Heart right ventricle (tissue), 16 donors: ENCODE measurements at regions of chr5 and their contacts with region 1.

Region 1: DNA sequence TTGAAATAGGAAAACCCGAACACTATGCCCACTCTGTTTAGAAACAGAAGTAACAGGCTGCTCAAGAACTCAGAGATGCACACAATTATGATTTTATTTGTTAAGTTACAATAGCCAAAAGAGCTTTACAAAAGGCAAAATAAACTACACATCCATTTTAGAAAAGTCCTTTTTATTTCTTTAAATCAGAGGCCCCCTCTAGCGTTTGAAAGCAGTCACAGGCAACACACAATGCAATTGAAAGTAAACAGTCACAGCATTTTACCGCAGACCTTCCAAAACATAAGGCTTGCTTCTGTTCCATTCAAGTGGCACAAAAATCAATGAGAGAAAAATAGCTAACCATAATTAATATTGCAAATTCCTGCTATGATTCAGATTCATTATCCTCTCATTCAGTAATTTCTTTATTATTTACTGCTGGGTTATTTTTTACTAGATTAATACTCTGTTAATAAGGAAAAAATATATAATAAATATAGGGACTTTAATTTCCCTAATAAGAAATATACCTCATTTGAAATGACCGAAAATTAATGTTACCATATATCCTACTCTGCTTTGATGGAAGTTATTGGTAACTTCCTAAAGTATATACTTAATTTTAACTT is 78.3 kb downstream of the CEP120 start:
- DNase-seq: peak in 1 of 2 donors; percentile 14
- ATAC-seq: no peak
- H3K4me3 ChIP-seq: no peak overlapping the region
- H3K27ac ChIP-seq: no peak overlapping the region
- H3K4me1 ChIP-seq: no peaks in the 10 kb centered on the region
- H3K27me3 ChIP-seq: no peaks in the 10 kb centered on the region
- CTCF ChIP-seq: peak in 8 of 9 donors; percentile 37 to 78 (median 65)

Region 2: DNA sequence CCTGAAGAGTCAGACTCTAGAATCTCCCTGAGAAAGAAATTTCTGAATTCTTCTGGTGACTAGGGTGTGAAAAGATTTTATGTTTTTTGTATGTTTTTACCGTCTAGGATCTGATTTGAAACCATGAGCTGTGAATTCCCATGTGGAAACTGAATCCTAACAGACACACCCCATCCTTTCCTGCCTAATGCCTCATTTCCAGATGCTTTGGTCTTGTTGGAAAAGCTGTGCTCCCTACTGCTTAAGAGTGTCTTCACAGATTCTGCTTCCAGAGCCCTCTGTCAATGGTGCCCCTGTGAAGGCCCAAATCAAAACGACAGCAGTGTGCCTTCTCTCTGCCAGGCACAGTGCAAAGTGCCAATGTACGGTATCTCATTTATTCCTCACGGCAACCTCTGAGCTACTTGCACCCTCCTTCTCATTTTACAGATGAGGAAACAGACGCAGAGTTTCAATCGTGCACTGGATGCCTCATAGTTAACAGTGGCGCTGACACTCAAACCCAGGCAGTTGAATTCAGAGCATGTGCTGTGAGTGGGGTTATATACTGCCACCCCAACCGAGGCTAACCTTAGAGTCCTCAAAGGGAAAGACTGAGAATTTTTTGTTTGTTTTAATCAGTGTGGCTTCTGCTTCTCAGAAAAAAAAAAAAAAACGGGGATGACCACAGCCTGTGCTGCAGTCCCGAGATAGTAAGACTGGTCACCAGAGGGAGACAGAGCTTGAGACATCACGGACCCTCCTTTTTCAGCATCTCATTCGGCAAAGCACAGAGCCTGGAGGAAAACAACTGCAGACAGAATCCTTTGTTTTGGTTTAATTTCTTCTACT is 844.5 kb before region 1 on chr5:
- intact Hi-C with region 1: loop called in 2 of 10 experiments (anchors 10 kb)
- DNase-seq: peak in 1 of 2 donors; percentile 40
- ATAC-seq: peak; percentile 30 to 86 (median 76)
- H3K4me3 ChIP-seq: peak overlapping the region in 1 of 10 donors; percentile 5
- H3K27ac ChIP-seq: peak overlapping the region in 6 of 10 donors; percentile 4 to 54 (median 34)
- H3K4me1 ChIP-seq: peaks cover 0 to 18% (median 0%) of the 10 kb centered on the region in 9 donors
- H3K27me3 ChIP-seq: no peaks in the 10 kb centered on the region
- CTCF ChIP-seq: peak; percentile 16 to 63 (median 49)

Region 3: DNA sequence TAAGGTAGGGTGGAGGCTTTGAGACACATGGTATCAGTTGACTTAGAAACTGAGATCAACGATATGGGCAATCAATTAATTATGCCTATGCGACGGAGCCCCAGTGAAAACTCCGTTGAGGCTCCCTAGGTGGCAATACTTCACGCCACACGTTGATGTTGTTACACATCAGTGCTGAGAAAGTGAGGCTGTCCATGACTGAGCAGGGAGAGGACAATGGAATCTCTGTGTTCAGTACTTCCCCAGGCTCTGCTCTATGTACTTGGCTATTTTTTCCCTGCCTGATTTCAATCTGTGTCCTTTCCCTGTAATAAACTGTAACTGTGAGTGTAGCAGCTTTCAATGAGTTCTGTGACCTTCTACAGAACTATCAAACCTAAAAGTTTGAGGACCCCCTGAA is 821.1 kb before region 1 on chr5:
- intact Hi-C with region 1: loop called in 1 of 10 experiments (anchors 10 kb)
- DNase-seq: no peak
- ATAC-seq: no peak
- H3K4me3 ChIP-seq: no peak overlapping the region
- H3K27ac ChIP-seq: no peak overlapping the region
- H3K4me1 ChIP-seq: no peaks in the 10 kb centered on the region
- H3K27me3 ChIP-seq: peaks cover 0 to 51% (median 19%) of the 10 kb centered on the region in 7 donors
- CTCF ChIP-seq: no peak

Region 4: GRCh38 chr5:122882837-122883236 is 462.1 kb before region 1 on chr5:
- intact Hi-C with region 1: loop called in 1 of 10 experiments (anchors 10 kb)
- DNase-seq: no peak
- ATAC-seq: no peak
- H3K4me3 ChIP-seq: no peak overlapping the region
- H3K27ac ChIP-seq: no peak overlapping the region
- H3K4me1 ChIP-seq: peaks cover 0 to 11% (median 0%) of the 10 kb centered on the region in 9 donors
- H3K27me3 ChIP-seq: no peaks in the 10 kb centered on the region
- CTCF ChIP-seq: no peak

Region 5: DNA sequence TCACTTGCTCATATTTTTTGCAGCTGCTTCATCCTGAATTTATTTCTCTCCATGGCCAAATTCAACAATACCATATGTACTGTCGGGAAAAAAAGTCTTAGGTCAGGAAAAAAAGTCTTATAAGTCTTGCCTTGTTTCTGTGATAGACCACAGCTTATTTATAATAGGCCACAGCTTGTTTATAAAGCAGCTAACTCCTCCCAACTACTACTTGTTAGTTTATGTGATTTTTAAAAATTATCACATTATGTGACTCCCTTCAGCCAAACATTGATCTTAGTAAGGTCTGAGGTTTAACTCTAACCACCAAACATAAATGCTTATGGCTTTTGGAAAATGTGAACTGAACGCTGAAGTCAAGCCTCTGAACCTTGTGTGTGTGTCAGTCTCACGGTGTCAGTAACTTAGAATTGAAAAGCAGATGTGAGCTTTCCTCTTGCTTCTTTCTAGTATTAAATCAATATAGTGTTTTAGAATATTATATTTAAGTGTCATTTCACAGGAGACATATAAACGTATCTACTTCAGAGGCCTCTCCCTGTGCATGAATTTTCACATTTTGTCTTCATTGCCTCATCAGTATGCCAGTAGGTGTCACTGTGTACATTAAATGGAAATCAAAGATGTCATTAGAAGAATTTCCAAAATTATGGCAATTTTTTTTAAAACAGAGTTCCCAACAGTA is 448.2 kb before region 1 on chr5:
- intact Hi-C with region 1: loop called in 7 of 10 experiments (anchors 5 to 10 kb)
- DNase-seq: no peak
- ATAC-seq: no peak
- H3K4me3 ChIP-seq: no peak overlapping the region
- H3K27ac ChIP-seq: no peak overlapping the region
- H3K4me1 ChIP-seq: peaks cover 0 to under 1% (median 0%) of the 10 kb centered on the region in 9 donors
- H3K27me3 ChIP-seq: no peaks in the 10 kb centered on the region
- CTCF ChIP-seq: peak; percentile 31 to 83 (median 63)

Region 6: DNA sequence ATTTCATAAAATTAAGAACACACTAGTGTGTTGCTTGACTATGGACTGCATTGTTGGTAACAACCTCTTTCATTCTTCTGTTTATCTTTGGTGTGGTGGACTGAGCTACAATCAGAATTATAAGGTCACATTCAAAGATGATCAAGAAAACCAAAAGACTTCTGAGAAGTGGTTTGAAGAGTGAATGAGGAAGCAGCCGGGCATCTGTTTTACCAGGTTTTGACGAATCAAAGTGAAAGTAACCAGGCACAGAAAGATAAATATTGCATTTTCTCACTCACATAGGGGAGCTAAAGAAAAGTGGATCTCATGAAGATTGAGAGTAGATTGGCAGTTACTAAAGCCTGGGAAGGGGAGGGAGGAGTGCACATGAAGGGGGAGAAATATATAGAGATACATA is 812.4 kb after region 1 on chr5:
- intact Hi-C with region 1: no loop called
- DNase-seq: no peak
- ATAC-seq: no peak
- H3K4me3 ChIP-seq: no peak overlapping the region
- H3K27ac ChIP-seq: no peak overlapping the region
- H3K4me1 ChIP-seq: peaks cover 0 to 11% (median 5%) of the 10 kb centered on the region in 9 donors
- H3K27me3 ChIP-seq: no peaks in the 10 kb centered on the region
- CTCF ChIP-seq: no peak